ENCODE measurements at regions of chr16 and their contacts with region 1.

Region 1: GRCh38 chr16:352547-353403 is at the start of gene AXIN1:
- DNase-seq: peak; percentile 100
- H3K4me3 ChIP-seq: peak within 1 kb of the TSS in 3 of 4 donors; percentile 11 to 89 (median 56)
- H3K27ac ChIP-seq: peak within 1 kb of the TSS in 2 of 5 donors; percentile 47 to 85
- H3K4me1 ChIP-seq: peaks cover 19 to 28% of the 10 kb centered on the region in 2 donors
- H3K27me3 ChIP-seq: no peaks in the 10 kb centered on the region
- CTCF ChIP-seq: peak in 3 of 6 experiments; percentile 47 to 72 (median 69)
- POLR2A ChIP-seq: peak; percentile 49 to 58
- total RNA-seq, gene AXIN1: 10.1 to 22.4 (median 19.7) TPM

Region 2: GRCh38 chr16:234468-235305 is 118.1 kb before region 1 on chr16 and contains the start of gene FAM234A:
- intact Hi-C with region 1: loop called (anchors 10 kb)
- DNase-seq: peak; percentile 94 to 97 (median 96)
- H3K4me3 ChIP-seq: peak within 1 kb of the TSS in 3 of 4 donors; percentile 35 to 78 (median 72)
- H3K27ac ChIP-seq: peak within 1 kb of the TSS; percentile 89 to 99 (median 98)
- H3K4me1 ChIP-seq: peaks cover 4 to 9% of the 10 kb centered on the region in 2 donors
- H3K27me3 ChIP-seq: no peaks in the 10 kb centered on the region
- CTCF ChIP-seq: peak in 5 of 6 experiments; percentile 16 to 50 (median 36)
- POLR2A ChIP-seq: peak; percentile 90 to 92
- total RNA-seq, gene FAM234A: 67.5 to 207 (median 99.4) TPM

Measured in adrenal gland (tissue), 19 donors.